ENCODE measurements at regions of chrX and their contacts with region 1.

Region 1: DNA sequence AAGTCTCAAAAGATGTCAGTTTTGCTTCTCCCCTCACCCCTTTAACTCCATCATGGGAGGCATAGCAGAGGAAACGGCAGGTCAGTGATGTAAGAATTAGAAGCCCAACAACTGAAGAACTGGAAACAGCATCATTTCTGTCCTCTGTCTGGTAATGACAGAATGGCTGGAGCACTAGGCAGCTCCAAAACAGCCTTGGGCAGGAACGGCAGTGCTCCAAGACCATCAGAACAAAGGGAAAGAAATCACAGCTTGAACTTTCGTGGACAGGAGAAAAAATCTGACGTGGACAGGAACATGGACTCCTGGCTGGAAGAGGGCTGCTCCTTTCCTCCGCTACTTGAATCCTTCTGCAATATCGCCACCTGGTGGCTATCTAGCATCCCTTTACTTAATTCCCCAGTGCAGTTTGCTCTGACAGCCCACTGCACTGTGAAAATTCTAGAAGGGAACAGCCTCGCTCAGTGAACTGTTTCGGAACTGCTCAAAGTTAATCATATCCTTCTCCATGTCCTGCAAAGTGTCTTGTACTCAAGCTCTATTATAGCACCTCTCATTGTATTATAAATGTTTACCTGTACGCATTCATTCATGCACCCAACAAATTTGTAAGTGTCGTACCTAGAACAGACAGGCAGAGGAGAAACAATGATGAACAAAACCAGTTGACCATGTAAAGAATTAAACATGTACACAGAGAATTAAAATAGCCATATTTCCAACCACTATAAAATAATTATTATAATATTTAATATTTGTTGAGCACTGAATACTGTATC is 20.4 kb downstream of the SLC25A53 start:
- DNase-seq: peak; percentile 59 to 83 (median 70)
- H3K4me3 ChIP-seq: peak overlapping the region; percentile 22
- H3K27ac ChIP-seq: peak overlapping the region in 1 of 2 donors; percentile 8
- H3K4me1 ChIP-seq: peaks cover 3% of the 10 kb centered on the region
- H3K27me3 ChIP-seq: no peaks in the 10 kb centered on the region
- CTCF ChIP-seq: peak; percentile 51 to 73 (median 61)
- EP300 ChIP-seq: no peak
- POLR2A ChIP-seq: no peak

Region 2: GRCh38 chrX:103520386-103520785 is 616.0 kb before region 1 on chrX:
- intact Hi-C with region 1: loop called in 1 of 4 experiments (anchors 10 kb)
- DNase-seq: no peak
- H3K4me3 ChIP-seq: no peak overlapping the region
- H3K27ac ChIP-seq: no peak overlapping the region
- H3K4me1 ChIP-seq: no peaks in the 10 kb centered on the region
- H3K27me3 ChIP-seq: no peaks in the 10 kb centered on the region
- CTCF ChIP-seq: no peak
- EP300 ChIP-seq: no peak
- POLR2A ChIP-seq: no peak

Region 3: DNA sequence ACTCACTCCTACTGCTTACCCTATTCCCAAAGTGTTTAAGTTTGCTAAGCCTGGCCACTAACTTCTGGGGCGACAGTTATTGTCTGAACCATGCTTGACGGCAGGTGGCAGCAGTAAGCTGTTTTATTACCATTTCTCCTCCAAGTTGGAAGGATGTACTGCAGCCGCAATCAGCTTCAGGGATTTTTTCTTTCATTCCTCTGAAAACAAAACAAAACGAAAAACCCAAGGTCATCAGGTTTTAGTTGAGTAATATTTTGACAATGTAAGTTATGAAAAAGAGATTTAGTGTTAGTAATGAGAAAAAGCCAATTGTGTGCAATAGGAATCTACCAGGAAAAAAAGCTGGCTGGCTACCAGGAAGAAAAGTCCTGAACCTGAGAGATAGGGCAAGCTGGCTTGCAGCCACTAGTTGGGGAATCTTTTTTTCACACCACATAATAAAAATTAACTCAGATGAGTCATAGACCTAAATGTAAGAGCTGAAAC is 291.2 kb before region 1 on chrX:
- intact Hi-C with region 1: loop called in 3 of 4 experiments (anchors 10 kb)
- DNase-seq: peak; percentile 77 to 87 (median 83)
- H3K4me3 ChIP-seq: no peak overlapping the region
- H3K27ac ChIP-seq: peak overlapping the region in 1 of 2 donors; percentile 60
- H3K4me1 ChIP-seq: no peaks in the 10 kb centered on the region
- H3K27me3 ChIP-seq: no peaks in the 10 kb centered on the region
- CTCF ChIP-seq: peak in 2 of 3 donors; percentile 60 to 76
- EP300 ChIP-seq: no peak
- POLR2A ChIP-seq: no peak

Measured in ovary (tissue), 10 donors.